ENCODE measurements at regions of chr13 and their contacts with region 1.

Region 1: DNA sequence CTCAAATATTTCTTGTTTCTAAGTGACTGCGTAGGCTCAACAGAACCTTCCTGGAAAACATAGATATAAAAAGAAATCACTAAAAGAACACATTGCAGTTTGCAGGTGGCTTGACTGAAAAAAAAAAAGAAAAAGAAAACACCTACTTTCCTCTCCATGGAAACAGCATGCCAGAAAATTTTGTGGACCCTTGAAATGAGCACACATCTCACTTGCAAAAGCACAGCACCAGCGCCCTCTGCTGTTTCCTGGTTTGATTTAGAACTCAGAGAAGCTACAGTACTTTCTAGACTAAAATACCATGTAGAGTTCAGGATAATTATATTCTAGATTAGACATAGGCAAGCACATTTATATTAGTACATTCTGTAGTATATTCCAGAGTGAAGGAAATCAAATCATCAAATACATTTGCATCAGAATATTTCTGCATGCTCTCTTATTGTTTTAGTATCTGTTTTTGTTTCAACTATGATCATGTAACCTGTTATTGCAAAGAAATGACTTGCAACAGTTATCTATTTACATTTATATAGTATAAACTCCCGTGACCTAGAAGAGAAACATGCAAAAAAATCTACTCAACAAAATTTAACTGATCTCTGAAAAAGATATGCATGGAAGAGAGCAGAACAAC is 22.3 kb upstream of the XPO4 start:
- DNase-seq: peak; percentile 74
- ATAC-seq: peak; percentile 75

Region 2: DNA sequence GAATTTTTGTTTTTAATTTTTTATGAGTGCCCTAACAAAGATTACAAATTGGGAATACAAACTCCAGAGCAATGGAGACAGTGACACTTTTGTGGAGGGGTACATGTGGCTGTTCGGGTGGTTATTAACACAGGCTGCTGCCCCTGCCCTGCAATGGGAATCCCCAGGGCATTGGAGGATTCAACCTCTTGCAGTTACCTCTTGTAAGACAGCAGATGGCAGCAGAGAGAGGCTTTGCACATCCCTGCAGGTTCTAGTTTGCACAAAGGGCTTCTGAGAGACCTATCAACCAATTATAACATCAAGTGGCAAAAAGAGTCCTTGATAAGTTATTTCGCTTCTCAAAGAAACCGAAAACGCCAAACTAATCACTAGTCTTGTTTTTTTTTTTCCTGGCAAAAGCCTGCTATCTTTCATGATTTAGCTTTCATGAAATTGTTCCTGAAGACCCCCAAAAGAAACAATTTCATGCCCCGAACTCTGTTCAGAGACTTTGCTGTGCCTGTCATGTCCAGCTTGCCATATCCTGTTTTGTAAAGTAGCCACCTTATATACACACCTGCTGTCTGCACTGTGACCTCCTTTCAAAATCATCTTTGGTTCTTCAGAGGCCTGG is 742.5 kb before region 1 on chr13:
- intact Hi-C with region 1: loop called (anchors 5 kb)
- DNase-seq: no peak
- ATAC-seq: peak; percentile 90

Region 3: DNA sequence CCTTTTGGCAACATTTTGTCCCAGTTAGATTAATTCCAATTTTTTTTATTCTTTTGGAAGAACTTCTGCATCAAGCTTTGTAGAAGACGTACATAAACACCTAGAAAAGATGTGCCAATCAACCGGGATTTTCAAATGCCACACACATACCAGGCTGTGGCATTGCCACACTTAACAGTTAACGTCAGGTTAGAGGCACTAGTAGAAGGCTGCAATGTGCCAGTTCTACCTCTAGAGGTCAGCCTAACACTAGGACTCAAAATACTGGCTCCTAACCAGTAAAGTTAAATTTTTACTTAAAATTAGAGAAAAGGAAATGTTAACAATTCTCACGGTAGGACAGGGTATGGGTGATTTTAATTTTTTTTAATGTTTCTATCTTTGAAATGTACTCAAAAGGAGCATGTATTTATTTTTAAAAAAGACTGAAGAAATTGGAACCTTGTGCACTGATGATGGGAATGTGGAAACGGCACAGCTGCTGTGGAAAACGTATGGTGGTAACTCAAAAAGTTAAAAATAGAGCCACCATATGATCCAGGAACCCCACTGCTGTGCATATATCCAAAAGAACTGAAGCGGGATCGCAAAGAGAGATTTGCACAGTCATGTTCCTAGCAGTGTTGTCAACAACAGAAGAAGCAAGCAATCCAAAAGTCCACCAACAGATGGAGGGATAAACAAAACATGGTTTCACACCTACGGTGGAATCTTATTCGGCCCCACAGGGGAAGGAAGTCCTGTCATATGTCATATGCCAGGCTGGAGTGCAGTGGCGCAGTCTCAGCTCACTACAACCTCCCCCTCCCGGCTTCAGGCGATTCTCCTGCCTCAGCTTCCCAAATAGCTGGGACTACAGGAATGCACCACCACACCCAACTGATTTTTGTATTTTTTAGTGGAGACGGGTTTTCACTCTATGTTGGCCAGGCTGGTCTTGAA is 429.5 kb before region 1 on chr13:
- intact Hi-C with region 1: loop called (anchors 5 kb)
- DNase-seq: no peak
- ATAC-seq: peak; percentile 88

Region 4: DNA sequence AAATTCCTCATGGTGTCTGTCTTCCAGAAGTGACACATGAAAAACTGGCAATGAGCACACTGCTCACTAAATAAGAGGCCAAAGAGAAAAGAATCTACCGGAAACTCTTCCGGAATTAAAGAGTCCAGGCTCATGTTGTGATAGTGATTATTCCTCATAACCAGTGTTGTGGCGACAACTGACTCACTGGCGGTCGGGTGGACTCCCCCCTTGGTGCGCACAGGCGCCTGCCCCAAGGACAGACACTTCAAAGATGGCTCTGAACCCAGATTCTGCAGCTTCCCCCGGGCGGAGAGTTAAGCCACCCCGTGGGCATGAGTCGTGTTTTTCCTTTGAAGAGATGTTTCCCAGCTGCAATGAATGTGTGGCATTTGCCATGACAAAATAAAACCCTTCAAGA is 211.1 kb before region 1 on chr13:
- intact Hi-C with region 1: loop called (anchors 5 kb)
- DNase-seq: no peak
- ATAC-seq: peak; percentile 8

Measured in Right ventricle myocardium superior (tissue), 1 donor.